RWPE1 (cell line): ENCODE measurements at regions of chr2 and their contacts with region 1.

Region 1: DNA sequence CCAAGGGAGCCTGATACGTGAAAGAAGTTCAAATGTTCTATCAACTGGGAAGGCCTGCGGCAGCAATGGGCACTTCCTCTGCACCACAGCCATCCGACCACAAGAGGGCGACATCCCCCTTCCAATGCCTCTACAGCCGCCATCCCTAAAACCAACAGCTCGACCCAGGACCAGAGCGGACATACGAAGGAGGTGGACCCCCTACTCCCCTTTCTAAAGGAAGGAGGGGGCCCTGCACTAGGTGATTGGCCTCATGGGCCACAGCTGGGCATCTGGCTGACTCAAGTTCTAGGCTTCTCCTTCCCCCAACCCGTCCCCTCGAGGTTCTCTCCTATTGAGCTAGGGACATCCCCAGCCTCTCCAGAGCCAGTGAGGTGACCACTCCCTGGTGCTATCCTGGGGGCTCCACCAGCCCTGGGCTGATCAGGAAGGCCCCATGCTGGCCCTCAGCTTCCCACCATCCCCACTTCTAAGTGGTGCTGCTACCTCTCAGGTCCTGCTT is 217.2 kb downstream of the TNS1 start:
- DNase-seq: peak; percentile 84
- H3K27ac ChIP-seq: no peak overlapping the region
- CTCF ChIP-seq: peak; percentile 91

Region 2: DNA sequence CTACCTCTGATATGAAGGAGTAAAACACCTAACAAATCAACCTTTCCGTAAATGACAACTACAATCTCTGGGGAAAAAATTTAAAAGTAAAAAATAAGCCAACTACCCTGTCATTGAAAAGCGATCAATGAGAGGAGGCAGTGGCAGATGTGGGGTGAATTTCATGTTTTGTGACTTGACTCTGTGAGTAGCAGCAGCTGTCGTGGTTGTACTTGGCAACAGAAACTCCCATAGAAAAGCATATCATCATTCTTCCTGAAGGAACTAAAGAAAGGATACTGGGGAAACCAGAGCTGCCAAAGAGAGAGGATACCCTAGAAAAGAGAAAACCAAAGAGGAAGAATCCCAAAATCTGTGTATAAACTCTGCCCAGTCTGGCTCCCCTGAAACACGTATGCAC is 19.2 kb before region 1 on chr2:
- CTCF ChIA-PET with region 1: no interaction called
- POLR2A ChIA-PET with region 1: no interaction called
- DNase-seq: no peak
- H3K27ac ChIP-seq: no peak overlapping the region
- CTCF ChIP-seq: no peak

Region 3: DNA sequence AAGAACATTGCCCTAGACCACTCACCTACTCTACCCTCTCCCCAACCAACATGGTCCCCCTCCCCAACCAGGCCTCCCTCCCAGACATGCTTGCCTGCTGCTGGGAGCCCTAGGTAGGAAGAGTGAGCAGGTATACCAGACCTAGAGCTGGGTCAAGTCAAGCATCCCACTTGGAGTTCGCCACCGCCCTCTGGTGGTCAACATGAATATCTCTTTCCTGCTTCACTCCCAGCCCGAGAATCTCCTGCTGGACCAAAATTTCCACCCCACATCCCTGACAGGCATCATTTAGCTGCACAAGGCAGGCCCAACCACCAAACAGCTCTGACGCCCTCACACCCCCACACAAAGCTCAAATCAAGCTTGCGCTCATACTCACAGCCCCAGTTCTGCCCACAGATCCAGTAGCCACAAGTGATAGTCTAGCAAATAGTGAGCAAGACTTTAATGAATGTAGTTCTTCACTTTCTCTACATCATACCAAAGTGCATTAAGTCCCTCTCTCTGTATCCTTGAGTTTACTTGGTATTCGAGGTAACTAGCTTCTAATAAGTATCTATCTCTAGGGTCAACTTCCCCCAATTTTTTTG is 101.2 kb after region 1 on chr2:
- CTCF ChIA-PET with region 1: interaction called, 28 read pairs
- POLR2A ChIA-PET with region 1: no interaction called
- DNase-seq: peak; percentile 82
- H3K27ac ChIP-seq: peak overlapping the region; percentile 13; the same call in 1 of the 2 replicates
- CTCF ChIP-seq: peak; percentile 73

Region 4: DNA sequence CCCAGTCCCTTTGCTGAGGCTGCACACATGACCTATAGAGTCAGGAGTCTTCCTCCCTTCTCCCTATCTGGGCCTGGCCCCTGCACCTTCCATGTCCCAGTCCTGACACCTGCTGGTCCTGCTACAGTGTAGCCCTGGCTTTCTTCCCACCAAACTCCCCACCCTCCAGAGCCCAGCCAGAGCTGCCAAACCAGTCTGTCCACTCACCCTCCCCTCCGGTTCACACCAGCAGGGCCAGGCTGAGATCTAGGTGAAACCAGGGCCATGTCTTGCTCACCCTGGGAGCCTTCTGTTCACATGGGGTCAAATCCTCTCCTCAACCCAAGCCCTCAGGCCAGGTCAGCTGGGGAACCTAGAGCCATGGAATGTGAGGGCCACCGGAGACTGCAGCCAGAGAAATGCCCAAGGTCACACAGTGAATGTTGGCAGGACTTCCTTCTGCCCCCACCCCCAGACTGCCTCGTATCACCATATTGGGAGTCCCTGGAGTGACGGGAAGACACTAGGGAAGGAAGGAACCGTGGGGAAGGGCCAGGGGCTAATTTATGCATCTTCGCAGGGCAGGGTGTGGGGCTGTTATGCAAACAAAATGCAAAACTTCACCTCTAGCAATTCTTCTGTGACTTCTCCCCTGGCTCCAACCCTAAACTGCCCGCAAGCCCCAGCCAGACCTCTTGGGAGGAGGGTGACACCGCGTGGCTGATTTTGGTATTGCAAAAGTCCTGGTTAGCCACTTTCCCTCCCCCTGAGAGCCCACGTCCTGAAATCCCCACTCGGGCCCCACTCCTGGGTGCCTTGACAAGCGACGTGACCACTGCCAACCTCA is 202.6 kb after region 1 on chr2:
- CTCF ChIA-PET with region 1: interaction called, 11 read pairs
- POLR2A ChIA-PET with region 1: no interaction called
- DNase-seq: peak; percentile 92
- H3K27ac ChIP-seq: peak overlapping the region; percentile 35
- CTCF ChIP-seq: peak; percentile 86

Region 5: GRCh38 chr2:218033590-218034496 is 248.2 kb after region 1 on chr2:
- CTCF ChIA-PET with region 1: interaction called, 34 read pairs
- POLR2A ChIA-PET with region 1: no interaction called
- DNase-seq: no peak
- H3K27ac ChIP-seq: peak overlapping the region; percentile 96
- CTCF ChIP-seq: no peak

Region 6: GRCh38 chr2:218067523-218067922 is 281.9 kb after region 1 on chr2:
- CTCF ChIA-PET with region 1: interaction called, 15 read pairs
- POLR2A ChIA-PET with region 1: no interaction called
- DNase-seq: no peak
- H3K27ac ChIP-seq: no peak overlapping the region
- CTCF ChIP-seq: no peak

Region 7: GRCh38 chr2:218074031-218074430 is 288.4 kb after region 1 on chr2:
- CTCF ChIA-PET with region 1: interaction called, 15 read pairs
- POLR2A ChIA-PET with region 1: no interaction called
- DNase-seq: no peak
- H3K27ac ChIP-seq: no peak overlapping the region
- CTCF ChIP-seq: no peak